ENCODE measurements at regions of chr14 and their contacts with region 1.

Region 1: GRCh38 chr14:100383727-100384158 is 60.6 kb downstream of the SLC25A47 start:
- DNase-seq: peak; percentile 57
- H3K4me3 ChIP-seq: no peak overlapping the region
- H3K27ac ChIP-seq: no peak overlapping the region
- H3K4me1 ChIP-seq: peaks cover 32% of the 10 kb centered on the region
- H3K27me3 ChIP-seq: no peaks in the 10 kb centered on the region
- CTCF ChIP-seq: peak; percentile 86 to 90
- POLR2A ChIP-seq: no peak

Region 2: DNA sequence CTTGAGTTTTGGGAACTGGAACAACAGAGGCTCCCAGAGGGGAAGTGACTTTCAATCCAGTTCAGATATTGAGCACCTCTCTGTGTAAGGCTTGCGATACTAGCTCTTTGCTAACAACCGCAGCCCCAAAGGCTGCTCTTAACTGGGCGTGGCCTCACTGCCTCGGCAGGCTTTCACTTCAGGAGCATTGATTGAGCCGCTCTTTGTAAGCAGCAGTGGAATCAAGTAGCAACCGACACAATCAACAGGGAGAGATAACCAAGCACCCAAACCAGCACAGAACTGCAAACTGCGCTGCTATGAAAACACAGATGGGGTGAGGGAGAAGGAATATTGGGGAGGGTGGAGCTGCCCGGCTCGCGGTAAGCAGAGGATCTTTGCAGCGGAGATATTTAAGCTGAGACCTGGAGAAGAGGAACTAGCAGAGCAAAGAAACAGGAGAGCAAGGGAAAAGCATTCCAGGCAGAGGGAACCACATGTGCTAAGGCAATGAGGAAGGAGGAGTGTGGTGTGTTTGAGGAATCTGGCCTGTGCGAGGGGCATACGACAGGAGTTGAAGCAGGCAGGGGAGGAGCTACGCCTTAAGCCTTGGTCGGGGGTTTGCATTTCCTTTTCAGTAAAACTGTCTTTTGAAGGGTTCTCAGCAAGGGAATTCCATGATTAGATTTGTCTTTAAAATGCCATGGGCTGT is 162.1 kb before region 1 on chr14:
- CTCF ChIA-PET with region 1: no interaction called
- POLR2A ChIA-PET with region 1: no interaction called
- dilution Hi-C with region 1: no loop called
- intact Hi-C with region 1: no loop called
- DNase-seq: peak; percentile 66
- H3K4me3 ChIP-seq: peak overlapping the region; percentile 27 to 77 (median 64)
- H3K27ac ChIP-seq: no peak overlapping the region
- H3K4me1 ChIP-seq: peaks cover 19% of the 10 kb centered on the region
- H3K27me3 ChIP-seq: no peaks in the 10 kb centered on the region
- CTCF ChIP-seq: no peak
- POLR2A ChIP-seq: no peak

Region 3: DNA sequence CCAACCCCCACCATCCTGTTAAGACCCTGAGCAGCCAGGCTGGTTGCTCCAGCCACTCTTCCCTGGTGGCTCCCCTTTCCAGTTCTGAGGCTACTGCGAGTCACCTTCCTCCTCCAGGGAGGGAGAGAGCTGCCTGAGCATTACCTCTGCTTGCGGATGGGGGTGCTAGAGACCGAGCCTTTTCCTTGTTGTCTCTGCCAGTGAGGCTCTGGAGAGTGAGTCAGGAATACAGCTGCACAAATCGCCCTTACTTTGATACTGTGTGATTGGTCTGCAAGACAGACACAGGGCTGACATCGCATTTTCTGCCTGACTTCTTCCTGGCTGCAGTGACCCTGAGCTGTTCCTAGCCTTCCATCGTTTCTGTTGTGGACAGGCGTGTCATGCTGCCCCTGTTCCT is 33.7 kb after region 1 on chr14:
- CTCF ChIA-PET with region 1: interaction called, 55 read pairs
- POLR2A ChIA-PET with region 1: no interaction called
- dilution Hi-C with region 1: no loop called
- intact Hi-C with region 1: loop called (anchors 1 kb)
- DNase-seq: peak; percentile 88
- H3K4me3 ChIP-seq: no peak overlapping the region
- H3K27ac ChIP-seq: no peak overlapping the region
- H3K4me1 ChIP-seq: no peaks in the 10 kb centered on the region
- H3K27me3 ChIP-seq: no peaks in the 10 kb centered on the region
- CTCF ChIP-seq: peak; percentile 72 to 82
- POLR2A ChIP-seq: no peak

Region 4: DNA sequence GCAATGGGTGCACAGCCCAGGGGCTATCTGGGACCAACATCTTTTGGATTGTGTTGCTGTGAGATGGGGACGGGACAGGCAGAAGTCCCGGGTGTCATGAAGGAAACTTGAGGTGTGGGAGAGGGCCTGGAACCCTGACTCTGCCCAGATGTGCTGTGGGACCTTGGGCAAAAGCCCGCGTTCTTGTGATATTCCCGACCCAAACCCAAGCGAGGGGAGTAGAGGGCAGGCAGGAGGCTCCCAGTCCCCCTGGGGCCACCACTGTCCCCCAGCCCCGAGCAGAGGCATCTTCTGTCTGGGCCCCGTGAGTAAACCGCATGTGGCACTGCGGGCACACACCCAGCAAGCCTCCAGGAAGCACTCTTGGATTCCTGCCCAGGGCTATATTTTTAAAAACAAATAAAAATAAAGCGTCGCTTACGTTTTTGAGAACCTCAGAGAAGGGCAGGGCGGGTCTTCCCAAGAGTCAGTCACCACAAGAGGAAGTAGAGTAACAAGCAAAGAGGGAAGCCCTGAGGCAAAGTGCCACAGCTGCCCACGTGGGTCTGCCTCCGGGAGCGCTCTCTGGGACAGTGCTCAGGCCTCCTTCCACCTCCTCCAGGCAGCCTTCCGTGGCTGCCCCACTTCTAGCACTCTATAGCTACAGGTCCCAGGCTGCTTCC is 164.0 kb after region 1 on chr14:
- CTCF ChIA-PET with region 1: interaction called, 5 read pairs
- POLR2A ChIA-PET with region 1: no interaction called
- dilution Hi-C with region 1: no loop called
- intact Hi-C with region 1: loop called (anchors 5 kb)
- DNase-seq: peak; percentile 34
- H3K4me3 ChIP-seq: no peak overlapping the region
- H3K27ac ChIP-seq: no peak overlapping the region
- H3K4me1 ChIP-seq: peaks cover 6% of the 10 kb centered on the region
- H3K27me3 ChIP-seq: no peaks in the 10 kb centered on the region
- CTCF ChIP-seq: no peak
- POLR2A ChIP-seq: no peak

Region 5: DNA sequence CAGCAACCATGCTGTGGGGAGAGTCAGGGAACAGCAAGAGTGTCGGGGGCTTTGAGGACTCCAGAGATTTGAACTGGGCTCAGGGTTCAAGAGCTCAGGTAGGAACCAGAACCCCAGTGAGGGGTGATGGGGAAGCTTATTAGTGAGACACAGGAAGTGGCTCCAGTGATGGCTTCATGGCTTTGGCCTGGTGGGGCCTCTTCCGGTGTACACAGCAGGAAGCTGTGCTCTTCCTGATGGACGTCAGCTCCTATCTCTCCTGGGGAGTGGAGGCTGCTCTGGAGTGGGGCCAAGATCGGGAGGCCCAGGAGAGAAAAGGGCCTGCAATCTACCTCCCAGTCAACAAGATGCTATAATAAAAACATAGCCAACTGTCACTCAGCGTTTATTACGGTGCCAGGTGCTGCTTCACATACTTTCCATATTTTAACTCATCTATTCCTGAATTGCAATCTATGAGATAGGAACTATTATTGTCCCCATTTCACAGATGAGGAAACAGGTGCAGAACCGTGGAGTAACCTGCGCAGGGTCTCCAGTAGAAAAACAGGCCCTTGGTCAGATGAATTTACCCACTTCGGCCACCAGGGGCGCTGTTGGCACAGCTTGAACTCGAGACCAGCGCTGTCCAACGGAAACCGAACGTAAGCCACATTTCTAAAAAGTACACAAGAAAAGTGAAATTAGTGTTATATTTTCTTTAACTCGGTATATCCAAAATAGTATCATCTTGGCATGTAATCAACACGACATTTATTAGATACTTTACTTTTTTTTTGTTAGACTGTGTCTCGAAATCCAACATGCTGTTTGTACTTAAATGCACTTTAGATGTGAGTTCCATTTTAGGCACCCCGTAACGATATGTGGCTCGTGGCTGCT is 279.4 kb after region 1 on chr14:
- CTCF ChIA-PET with region 1: interaction called, 26 read pairs
- POLR2A ChIA-PET with region 1: no interaction called
- dilution Hi-C with region 1: no loop called
- intact Hi-C with region 1: no loop called
- DNase-seq: peak; percentile 66
- H3K4me3 ChIP-seq: no peak overlapping the region
- H3K27ac ChIP-seq: no peak overlapping the region
- H3K4me1 ChIP-seq: peaks cover 6% of the 10 kb centered on the region
- H3K27me3 ChIP-seq: no peaks in the 10 kb centered on the region
- CTCF ChIP-seq: peak; percentile 81 to 96
- POLR2A ChIP-seq: no peak

Region 6: DNA sequence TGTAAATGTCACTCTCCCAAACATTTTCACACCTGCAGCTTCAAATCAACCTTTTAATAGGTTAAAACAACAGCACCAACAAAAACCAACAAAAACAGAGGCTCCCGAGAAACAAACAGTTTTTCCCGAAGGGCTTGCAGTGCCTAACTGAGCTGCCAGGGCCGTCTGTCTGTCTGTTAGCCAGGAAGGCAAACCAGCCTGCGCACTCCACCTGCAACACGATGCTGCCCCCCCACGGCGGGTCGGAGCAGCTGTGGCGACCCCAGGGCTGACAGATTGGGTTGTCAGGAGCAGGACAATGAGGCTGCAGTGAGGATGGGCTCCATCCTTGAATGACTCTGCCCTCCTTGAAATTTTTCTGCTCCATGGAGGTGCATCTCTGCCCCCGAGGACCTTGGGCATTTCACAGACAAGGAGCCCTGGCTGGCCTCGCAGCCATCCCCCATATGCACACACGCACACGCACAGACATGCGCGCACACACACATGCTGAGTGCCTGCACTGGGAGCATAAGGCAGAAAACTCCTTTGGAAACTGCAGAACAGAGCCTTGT is 517.2 kb after region 1 on chr14:
- CTCF ChIA-PET with region 1: interaction called, 11 read pairs
- POLR2A ChIA-PET with region 1: no interaction called
- dilution Hi-C with region 1: no loop called
- intact Hi-C with region 1: loop called (anchors 5 kb)
- DNase-seq: peak; percentile 8
- H3K4me3 ChIP-seq: no peak overlapping the region
- H3K27ac ChIP-seq: no peak overlapping the region
- H3K4me1 ChIP-seq: peaks cover 13% of the 10 kb centered on the region
- H3K27me3 ChIP-seq: peaks cover 3 to 6% of the 10 kb centered on the region in 2 experiments
- CTCF ChIP-seq: peak; percentile 8 to 42
- POLR2A ChIP-seq: no peak

Region 7: DNA sequence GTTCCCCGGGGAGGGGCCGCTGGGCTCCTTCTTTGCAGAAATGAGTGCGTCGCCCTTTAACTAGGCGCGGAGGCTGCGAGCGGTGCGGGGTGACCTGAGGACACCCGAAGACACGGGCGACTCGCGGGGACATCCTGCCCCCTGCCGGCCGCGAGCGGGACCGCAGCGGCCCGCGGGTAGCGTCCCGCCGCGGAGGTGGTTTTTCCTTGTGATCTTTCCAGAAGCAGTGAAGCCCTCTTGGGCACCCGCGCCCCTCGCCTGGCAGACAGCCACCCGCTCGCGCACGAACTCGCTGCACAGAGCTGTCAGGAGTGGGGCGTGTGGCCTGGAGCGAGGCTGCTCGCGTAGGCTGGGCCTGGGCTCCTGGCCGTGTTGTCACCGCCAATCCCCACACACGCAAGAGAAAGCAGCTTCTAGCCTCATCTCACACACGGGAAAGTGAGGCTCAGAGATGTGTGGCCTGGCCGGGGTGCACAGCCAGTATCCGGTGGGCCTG is 1244.8 kb after region 1 on chr14:
- CTCF ChIA-PET with region 1: interaction called, 39 read pairs
- POLR2A ChIA-PET with region 1: no interaction called
- dilution Hi-C with region 1: no loop called
- intact Hi-C with region 1: no loop called
- DNase-seq: peak; percentile 59
- H3K4me3 ChIP-seq: no peak overlapping the region
- H3K27ac ChIP-seq: no peak overlapping the region
- H3K4me1 ChIP-seq: peaks cover 2% of the 10 kb centered on the region
- H3K27me3 ChIP-seq: no peaks in the 10 kb centered on the region
- CTCF ChIP-seq: peak; percentile 93 to 95
- POLR2A ChIP-seq: no peak